IMR-90 (cell line): ENCODE measurements at regions of chr7 and their contacts with region 1.

Region 1: DNA sequence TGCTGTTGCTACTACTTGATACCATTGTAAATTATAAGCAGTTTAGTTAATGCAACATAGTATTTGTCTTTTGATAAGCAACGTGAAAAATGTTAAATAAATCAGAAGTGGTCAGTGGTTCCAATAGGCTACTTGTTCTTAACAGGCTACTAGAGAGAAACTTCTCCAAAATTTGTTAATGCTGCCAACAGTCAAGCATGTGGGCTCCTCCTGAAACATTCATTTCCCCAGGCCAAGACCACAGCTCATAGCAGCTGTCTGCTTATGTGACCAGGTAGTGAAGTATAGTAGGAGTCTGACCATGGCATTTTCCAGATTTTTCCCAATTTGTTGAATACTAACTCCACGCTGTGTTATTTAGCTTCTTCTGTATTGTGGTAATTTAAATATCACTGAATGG is 81.0 kb downstream of the CYP51A1 start:
- DNase-seq: no peak
- ATAC-seq: no peak
- H3K4me3 ChIP-seq: no peak overlapping the region
- H3K27ac ChIP-seq: no peak overlapping the region
- H3K4me1 ChIP-seq: no peaks in the 10 kb centered on the region
- H3K27me3 ChIP-seq: no peaks in the 10 kb centered on the region
- CTCF ChIP-seq: no peak
- POLR2A ChIP-seq: no peak
- RAD21 ChIP-seq: no peak

Region 2: DNA sequence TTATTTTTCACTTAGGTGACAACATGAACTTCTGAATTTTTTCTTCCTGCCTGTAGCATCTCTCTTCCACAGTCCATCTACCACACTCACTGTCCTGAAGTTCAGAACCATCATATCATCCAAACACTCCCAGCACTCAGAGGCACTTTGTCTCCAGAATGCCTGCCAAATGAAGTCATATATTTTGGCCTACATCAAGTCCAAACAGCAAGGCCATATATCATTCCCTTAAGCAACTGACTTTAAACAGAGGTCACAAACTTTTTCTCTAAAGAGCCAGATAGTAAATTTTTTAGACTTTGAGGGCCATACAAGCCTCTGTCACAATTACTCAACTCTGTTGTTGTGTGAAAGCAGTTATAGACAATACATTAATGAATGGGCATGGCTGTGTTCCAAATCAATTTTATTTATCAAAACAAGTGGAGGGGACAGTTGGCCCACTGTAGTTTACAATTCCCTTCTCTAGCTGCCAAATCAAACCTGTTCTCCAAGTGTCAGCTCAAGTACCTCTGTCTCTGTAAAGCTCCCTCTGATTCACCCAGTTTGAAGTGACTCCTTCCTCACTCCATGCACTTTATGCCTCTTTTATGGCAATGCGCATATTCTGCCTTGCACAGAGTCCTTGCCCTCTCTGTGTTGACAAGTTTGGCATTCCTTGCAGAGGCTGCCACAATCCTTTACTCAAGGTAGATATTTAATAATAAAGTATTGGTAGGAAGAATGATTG is 483.4 kb before region 1 on chr7:
- CTCF ChIA-PET with region 1: no interaction called
- POLR2A ChIA-PET with region 1: no interaction called
- dilution Hi-C with region 1: no loop called
- in situ Hi-C with region 1: no loop called
- intact Hi-C with region 1: no loop called
- DNase-seq: no peak
- ATAC-seq: no peak
- H3K4me3 ChIP-seq: no peak overlapping the region
- H3K27ac ChIP-seq: no peak overlapping the region
- H3K4me1 ChIP-seq: no peaks in the 10 kb centered on the region; the same call in 1 of the 2 replicates
- H3K27me3 ChIP-seq: peaks cover 2% of the 10 kb centered on the region; the same call in 1 of the 2 replicates
- CTCF ChIP-seq: no peak
- POLR2A ChIP-seq: no peak
- RAD21 ChIP-seq: no peak

Region 3: GRCh38 chr7:92034116-92034515 is 19.2 kb before region 1 on chr7:
- CTCF ChIA-PET with region 1: no interaction called
- POLR2A ChIA-PET with region 1: interaction called, 12 read pairs
- dilution Hi-C with region 1: no loop called
- in situ Hi-C with region 1: no loop called
- intact Hi-C with region 1: no loop called
- DNase-seq: peak; percentile 50
- ATAC-seq: no peak
- H3K4me3 ChIP-seq: no peak overlapping the region
- H3K27ac ChIP-seq: no peak overlapping the region
- H3K4me1 ChIP-seq: no peaks in the 10 kb centered on the region
- H3K27me3 ChIP-seq: no peaks in the 10 kb centered on the region
- CTCF ChIP-seq: no peak
- POLR2A ChIP-seq: no peak
- RAD21 ChIP-seq: no peak

Region 4: GRCh38 chr7:92255308-92255707 is 202.0 kb after region 1 on chr7:
- CTCF ChIA-PET with region 1: no interaction called
- POLR2A ChIA-PET with region 1: no interaction called
- dilution Hi-C with region 1: no loop called
- in situ Hi-C with region 1: no loop called
- intact Hi-C with region 1: no loop called
- DNase-seq: peak; percentile 93
- ATAC-seq: peak; percentile 96
- H3K4me3 ChIP-seq: no peak overlapping the region
- H3K27ac ChIP-seq: no peak overlapping the region
- H3K4me1 ChIP-seq: no peaks in the 10 kb centered on the region; the same call in 1 of the 2 replicates
- H3K27me3 ChIP-seq: no peaks in the 10 kb centered on the region
- CTCF ChIP-seq: no peak
- POLR2A ChIP-seq: no peak
- RAD21 ChIP-seq: no peak